GM10248 (cell line): ENCODE measurements at regions of chr6 and their contacts with region 1.

Region 1: DNA sequence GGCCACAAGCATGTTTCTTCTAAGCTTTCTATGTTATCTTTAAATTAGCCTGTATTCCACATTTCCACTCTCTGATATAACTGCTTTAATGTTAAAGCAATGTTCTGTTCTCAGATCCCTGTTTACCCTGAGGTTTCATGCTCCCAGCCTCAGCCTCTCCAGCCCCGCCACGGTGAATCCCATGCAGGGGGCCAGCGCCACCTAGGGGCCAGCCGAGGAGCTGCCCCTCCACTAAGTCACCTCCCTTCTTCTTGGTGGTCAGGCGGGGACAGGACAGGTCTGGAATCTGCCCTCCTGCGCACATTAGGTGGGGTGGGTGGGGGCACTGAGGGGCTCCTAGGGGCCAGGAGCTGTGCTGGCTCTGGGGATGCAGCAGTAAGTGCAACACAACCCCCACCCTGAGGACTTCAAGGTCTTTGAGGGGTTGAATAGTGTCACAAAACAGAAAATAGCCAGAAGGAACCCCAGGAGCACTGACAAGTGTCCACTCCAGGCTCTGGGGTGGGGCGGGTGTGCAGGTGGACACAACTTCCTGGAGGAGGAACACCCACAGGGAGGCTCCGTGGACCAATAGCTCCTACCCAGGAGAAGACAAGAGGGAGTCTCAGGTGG is 61.6 kb downstream of the RAB44 start:
- DNase-seq: peak; percentile 89
- CTCF ChIP-seq: peak; percentile 97

Region 2: GRCh38 chr6:36296240-36296639 is 463.0 kb before region 1 on chr6:
- CTCF ChIA-PET with region 1: no interaction called
- POLR2A ChIA-PET with region 1: no interaction called
- DNase-seq: no peak
- CTCF ChIP-seq: no peak

Region 3: DNA sequence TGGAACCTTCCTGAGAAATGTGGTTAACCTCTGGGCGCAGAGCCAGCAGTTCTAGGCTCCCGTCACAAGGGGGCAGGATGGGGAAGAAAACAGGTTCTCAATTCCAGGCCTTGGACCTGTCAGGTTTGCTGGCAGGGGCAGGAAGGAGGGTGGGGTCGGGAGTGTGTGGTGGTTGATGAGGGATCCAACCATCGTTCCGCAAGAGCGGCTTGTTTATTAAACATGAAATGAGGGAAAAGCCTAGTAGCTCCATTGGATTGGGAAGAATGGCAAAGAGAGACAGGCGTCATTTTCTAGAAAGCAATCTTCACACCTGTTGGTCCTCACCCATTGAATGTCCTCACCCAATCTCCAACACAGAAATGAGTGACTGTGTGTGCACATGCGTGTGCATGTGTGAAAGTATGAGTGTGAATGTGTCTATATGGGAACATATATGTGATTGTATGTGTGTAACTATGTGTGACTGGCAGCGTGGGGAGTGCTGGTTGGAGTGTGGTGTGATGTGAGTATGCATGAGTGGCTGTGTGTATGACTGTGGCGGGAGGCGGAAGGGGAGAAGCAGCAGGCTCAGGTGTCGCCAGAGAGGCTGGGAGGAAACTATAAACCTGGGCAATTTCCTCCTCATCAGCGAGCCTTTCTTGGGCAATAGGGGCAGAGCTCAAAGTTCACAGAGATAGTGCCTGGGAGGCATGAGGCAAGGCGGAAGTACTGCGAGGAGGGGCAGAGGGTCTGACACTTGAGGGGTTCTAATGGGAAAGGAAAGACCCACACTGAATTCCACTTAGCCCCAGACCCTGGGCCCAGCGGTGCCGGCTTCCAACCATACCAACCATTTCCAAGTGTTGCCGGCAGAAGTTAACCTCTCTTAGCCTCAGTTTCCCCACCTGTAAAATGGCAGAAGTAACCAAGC is 135.5 kb before region 1 on chr6:
- CTCF ChIA-PET with region 1: interaction called, 37 read pairs
- POLR2A ChIA-PET with region 1: no interaction called
- DNase-seq: peak; percentile 84
- CTCF ChIP-seq: peak; percentile 91

Region 4: GRCh38 chr6:36685936-36686667 is 73.2 kb before region 1 on chr6:
- CTCF ChIA-PET with region 1: interaction called, 21 read pairs
- POLR2A ChIA-PET with region 1: interaction called, 4 read pairs
- DNase-seq: no peak
- CTCF ChIP-seq: no peak

Region 5: GRCh38 chr6:36717871-36718540 is 41.2 kb before region 1 on chr6:
- CTCF ChIA-PET with region 1: interaction called, 17 read pairs
- POLR2A ChIA-PET with region 1: no interaction called
- DNase-seq: no peak
- CTCF ChIP-seq: no peak

Region 6: GRCh38 chr6:36739947-36740817 is 19.1 kb before region 1 on chr6:
- CTCF ChIA-PET with region 1: interaction called, 48 read pairs
- POLR2A ChIA-PET with region 1: no interaction called
- DNase-seq: no peak
- CTCF ChIP-seq: no peak